ENCODE measurements at regions of chr13 and their contacts with region 1.

Region 1: DNA sequence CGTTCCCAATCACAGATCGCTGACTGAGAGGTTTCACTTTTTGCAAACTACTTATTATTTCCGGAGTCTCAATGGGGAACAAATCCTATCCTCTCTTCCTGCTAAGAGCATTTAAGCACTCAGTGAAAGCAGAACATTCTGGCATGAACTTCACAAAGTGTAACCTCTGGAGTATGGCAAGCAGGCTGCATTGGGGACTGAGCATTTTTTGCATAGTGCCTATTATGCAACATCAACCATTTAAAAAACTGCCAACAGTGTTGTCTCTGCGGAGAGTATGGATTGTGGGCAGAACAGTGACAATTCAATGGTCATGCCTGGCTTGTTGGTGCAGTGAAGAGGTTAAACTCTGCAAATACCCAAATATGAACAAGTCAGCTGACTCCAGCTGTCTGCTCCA is 484.6 kb downstream of the OLFM4 start:
- DNase-seq: no peak
- ATAC-seq: no peak
- H3K4me3 ChIP-seq: no peak overlapping the region
- H3K27ac ChIP-seq: no peak overlapping the region
- H3K4me1 ChIP-seq: no peaks in the 10 kb centered on the region
- H3K27me3 ChIP-seq: no peaks in the 10 kb centered on the region
- CTCF ChIP-seq: no peak
- POLR2A ChIP-seq: no peak
- RAD21 ChIP-seq: no peak

Region 2: DNA sequence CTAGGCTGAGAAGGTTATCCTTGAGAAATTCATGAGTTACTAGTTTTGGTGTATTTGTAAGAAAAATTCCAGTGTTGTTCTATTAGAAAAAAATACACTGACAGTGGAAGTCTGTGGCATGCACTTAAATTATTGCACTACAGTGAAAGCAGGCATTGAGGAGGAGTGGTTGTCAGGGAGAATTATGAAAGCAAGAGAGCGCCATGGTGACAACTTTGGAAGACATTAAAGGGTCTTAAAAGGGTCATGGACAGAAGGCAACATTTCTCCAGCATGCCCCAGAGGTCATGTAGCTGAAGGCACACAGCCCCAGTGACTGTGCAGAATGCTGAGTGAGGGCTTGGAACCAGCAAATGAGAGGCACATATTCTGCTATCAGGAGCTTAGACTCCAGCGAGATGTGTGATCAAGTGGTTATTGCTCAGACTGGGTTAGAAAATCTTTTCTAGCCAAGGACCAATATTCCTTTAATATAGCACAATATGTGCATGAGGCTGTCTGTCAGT is 191.9 kb before region 1 on chr13:
- CTCF ChIA-PET with region 1: no interaction called
- POLR2A ChIA-PET with region 1: no interaction called
- dilution Hi-C with region 1: no loop called
- in situ Hi-C with region 1: no loop called
- intact Hi-C with region 1: no loop called
- DNase-seq: no peak
- ATAC-seq: no peak
- H3K4me3 ChIP-seq: no peak overlapping the region
- H3K27ac ChIP-seq: no peak overlapping the region
- H3K4me1 ChIP-seq: no peaks in the 10 kb centered on the region
- H3K27me3 ChIP-seq: no peaks in the 10 kb centered on the region
- CTCF ChIP-seq: no peak
- POLR2A ChIP-seq: no peak
- RAD21 ChIP-seq: no peak

Region 3: DNA sequence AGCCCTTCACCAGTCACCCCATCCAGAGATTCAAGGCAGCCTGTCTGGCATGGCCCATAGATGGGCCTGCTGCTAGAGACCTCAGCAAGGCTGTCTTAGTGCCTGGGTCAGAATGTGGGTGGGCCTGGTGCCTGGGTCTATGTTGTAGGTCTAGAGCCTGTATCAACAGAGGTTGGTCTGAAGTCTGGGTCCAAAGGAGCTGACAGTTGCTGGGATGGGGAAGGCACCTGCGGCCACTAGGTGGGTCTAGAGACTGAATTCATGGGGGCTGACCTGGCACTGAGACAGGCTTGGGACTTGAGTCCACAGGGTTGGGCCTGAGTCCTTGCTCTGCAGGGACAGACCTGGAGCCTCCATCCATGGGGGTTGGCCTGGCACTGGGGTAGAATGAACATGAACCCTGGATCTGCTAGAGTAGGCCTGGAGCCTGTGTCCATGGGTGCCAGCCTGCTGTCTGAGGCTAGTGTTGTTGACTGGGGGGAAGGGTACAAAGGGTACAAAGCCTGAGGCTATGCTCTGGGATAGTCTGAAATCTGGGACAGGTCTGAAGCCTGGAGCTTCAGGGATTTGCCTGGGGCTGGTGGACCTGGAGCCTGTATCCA is 32.2 kb after region 1 on chr13:
- CTCF ChIA-PET with region 1: no interaction called
- POLR2A ChIA-PET with region 1: no interaction called
- dilution Hi-C with region 1: no loop called
- in situ Hi-C with region 1: no loop called
- intact Hi-C with region 1: loop called (anchors 1 kb)
- DNase-seq: no peak
- ATAC-seq: no peak
- H3K4me3 ChIP-seq: no peak overlapping the region
- H3K27ac ChIP-seq: no peak overlapping the region
- H3K4me1 ChIP-seq: no peaks in the 10 kb centered on the region
- H3K27me3 ChIP-seq: no peaks in the 10 kb centered on the region
- CTCF ChIP-seq: no peak
- POLR2A ChIP-seq: no peak
- RAD21 ChIP-seq: no peak